ENCODE measurements at regions of chr9 and their contacts with region 1.

Region 1: DNA sequence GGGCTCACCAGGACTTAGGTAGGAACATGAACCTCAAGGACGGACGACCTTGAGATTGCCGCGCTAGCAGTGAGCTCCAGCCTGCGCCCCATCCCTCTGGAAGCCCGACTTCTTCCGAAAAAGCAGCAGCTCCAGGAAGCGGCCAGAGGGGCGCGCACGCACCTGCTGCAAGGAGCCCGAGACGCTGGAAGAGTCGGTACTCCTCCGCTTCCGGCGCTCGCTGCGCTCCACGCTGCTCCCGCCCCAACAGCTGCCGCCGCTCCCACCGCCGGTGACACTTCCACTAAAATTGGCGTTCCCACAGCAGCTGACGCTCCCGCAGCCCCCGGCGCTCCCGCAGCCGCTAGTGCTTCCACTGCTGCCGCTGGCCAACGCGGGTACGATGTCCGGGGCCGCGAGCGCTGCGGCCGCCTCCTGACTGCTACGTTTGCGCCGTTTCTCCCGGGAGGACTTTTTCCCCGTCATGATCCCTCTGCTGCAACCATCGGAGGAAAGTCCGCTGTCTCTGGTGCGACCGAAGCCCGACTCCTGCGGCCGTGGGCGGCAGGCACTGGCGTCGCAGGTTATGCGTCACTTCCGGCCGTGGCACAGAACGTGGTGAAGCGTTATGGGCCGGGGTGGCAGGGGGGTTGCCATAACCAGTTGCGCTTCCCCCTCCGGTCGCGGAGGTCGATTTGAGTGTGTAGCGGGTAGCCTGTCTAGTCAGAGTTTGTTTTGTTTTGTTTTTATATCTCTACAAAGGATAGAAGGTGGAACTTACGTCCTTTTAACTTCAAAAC is at the start of gene CAAP1:
- DNase-seq: peak; percentile 91

Region 2: GRCh38 chr9:26946753-26947727 is 54.6 kb after region 1 on chr9 and contains the start of gene PLAA:
- CTCF ChIA-PET with region 1: no interaction called
- POLR2A ChIA-PET with region 1: interaction called, 20 read pairs
- DNase-seq: peak; percentile 81

Region 3: GRCh38 chr9:26955921-26956859 is 63.8 kb after region 1 on chr9 and contains the start of gene IFT74:
- CTCF ChIA-PET with region 1: no interaction called
- POLR2A ChIA-PET with region 1: interaction called, 28 read pairs
- DNase-seq: peak; percentile 96

Measured in HEK293T (cell line).